Caco-2 (cell line): ENCODE measurements at regions of chr20 and their contacts with region 1.

Region 1: DNA sequence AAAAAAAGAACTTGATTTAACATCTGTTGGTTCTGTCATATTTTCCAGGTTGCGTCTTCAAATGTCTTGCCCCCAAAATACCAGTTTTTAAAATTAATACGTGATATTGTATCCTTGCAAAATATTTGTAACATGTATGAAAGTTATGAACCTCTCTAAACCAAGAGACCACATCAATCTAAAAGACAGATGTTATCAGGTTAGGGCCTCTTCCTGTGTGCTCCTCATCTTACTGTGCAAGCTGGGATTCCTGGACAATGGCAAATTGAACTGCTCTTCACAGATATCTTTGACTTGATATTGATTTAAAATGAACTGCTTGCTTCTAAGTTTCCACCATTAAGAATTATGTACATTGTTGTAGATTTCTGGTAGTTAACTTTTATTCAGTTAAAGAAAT is 9.6 kb downstream of the TMEM239 start:
- DNase-seq: no peak
- H3K4me3 ChIP-seq: no peak overlapping the region
- H3K4me3 Mint-ChIP-seq: no peak overlapping the region
- H3K27ac Mint-ChIP-seq: no peak overlapping the region
- H3K4me1 ChIP-seq: no peaks in the 10 kb centered on the region
- H3K4me1 Mint-ChIP-seq: no peaks in the 10 kb centered on the region
- H3K27me3 ChIP-seq: no peaks in the 10 kb centered on the region
- H3K27me3 Mint-ChIP-seq: peaks cover 9% of the 10 kb centered on the region
- CTCF ChIP-seq: no peak

Region 2: DNA sequence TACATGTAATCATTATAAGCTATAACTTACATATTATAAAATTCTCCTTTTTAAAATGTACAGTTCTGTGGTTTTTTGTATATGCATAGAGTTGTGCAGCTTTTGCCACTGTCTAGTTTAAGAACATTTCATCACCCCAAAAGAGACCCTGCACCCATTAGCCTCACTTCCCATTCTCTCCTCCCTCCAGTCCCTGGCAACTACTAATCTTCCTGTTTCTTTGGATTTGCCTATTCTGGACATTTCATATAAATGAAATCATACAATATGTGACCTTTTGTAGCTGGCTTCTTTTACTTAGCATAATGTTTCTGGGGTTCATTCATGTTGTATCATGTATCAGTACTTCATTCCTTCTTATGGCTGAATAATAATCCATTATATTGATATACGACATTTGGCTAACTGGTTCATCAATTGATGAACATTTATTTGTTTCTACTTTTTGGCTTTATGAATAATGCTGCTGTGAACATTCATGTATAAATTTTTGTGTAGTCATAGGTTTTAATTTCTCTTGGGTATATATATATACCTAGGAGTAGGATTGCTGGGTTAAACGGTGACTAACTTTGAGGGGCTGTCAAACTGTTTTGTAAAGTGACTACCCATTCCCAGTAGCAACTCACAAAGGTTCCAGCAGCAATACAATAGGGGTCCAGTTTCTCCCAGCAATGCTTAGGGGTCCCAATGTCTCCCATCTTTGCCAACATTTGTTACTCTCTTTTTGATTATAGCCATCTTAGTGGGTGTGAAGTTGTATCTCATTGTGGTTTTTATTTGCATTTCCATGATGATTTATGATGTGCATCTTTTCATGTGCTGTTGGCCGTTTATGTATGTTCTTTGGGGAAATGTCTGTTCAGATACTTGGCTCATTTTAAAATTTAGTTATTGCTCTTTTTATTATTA is 58.2 kb after region 1 on chr20:
- CTCF ChIA-PET with region 1: interaction called, 15 read pairs
- POLR2A ChIA-PET with region 1: no interaction called
- intact Hi-C with region 1: no loop called
- DNase-seq: no peak
- H3K4me3 ChIP-seq: no peak overlapping the region
- H3K4me3 Mint-ChIP-seq: no peak overlapping the region
- H3K27ac Mint-ChIP-seq: no peak overlapping the region
- H3K4me1 ChIP-seq: peaks cover 12% of the 10 kb centered on the region
- H3K4me1 Mint-ChIP-seq: peaks cover 10% of the 10 kb centered on the region
- H3K27me3 ChIP-seq: no peaks in the 10 kb centered on the region
- H3K27me3 Mint-ChIP-seq: no peaks in the 10 kb centered on the region
- CTCF ChIP-seq: no peak